Sigmoid colon (tissue), 7 donors: ENCODE measurements at regions of chr7 and their contacts with region 1.

Region 1: DNA sequence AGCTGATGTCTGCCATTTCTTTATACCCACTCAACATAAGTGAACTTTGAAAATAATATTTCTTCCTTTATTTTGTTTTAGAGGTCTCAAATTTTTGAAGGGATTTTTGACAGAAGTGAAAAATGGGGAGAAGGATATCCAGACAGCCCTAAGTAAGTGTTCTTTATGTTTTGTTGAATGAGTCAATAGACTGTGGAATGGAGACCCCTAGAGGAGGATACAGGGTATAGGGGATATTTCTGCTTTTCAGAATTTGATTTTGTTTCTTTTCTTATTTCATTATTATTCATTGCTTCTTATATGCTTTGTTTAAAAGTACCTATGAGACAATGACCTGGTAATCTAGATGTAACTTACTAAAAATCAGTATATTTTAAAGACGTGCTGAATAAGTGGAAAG is 34.4 kb downstream of the PLEKHA8 start:
- DNase-seq: no peak
- H3K4me3 ChIP-seq: no peak overlapping the region
- H3K27ac ChIP-seq: no peak overlapping the region
- H3K4me1 ChIP-seq: no peaks in the 10 kb centered on the region
- H3K27me3 ChIP-seq: no peaks in the 10 kb centered on the region
- CTCF ChIP-seq: peak in 3 of 4 experiments; percentile 7 to 46 (median 34)
- EP300 ChIP-seq: no peak
- POLR2A ChIP-seq: no peak

Region 2: GRCh38 chr7:29748286-29749108 is 314.1 kb before region 1 on chr7:
- intact Hi-C with region 1: loop called (anchors 10 kb)
- DNase-seq: no peak
- H3K4me3 ChIP-seq: no peak overlapping the region
- H3K27ac ChIP-seq: peak overlapping the region in 1 of 4 donors; percentile 57
- H3K4me1 ChIP-seq: peaks cover 0 to 12% (median 4%) of the 10 kb centered on the region in 4 donors
- H3K27me3 ChIP-seq: no peaks in the 10 kb centered on the region
- CTCF ChIP-seq: peak; percentile 9 to 53 (median 22)
- EP300 ChIP-seq: no peak
- POLR2A ChIP-seq: no peak

Region 3: DNA sequence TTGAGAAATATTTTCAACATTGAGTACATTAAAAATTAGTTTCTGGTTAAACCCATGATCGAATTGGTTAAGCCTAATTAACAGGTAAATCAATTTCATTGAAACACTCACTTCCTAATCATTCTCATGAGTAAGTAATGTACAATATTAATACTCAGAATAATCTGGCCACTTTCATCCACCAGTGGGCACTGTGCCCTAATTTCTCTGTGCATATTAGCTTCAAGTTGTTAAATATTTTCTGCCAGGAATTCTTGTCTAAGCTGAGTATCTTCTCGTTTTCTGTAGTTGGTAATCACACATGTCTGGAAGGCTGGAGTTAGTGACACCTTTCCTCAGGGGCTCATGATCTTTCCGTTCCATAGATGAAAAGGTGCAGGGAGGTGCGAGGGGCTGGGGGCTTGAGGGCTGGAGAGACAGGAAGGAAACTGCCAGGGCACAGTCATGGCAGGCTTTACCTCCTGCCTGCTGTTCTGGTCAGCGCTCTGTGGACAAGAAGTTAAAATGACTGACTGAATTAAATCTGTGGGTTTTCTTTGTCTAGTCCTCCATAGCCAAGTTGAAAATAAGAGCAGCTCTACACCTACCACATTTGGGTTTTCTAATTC is 184.4 kb before region 1 on chr7:
- intact Hi-C with region 1: loop called (anchors 5 kb)
- DNase-seq: no peak
- H3K4me3 ChIP-seq: no peak overlapping the region
- H3K27ac ChIP-seq: no peak overlapping the region
- H3K4me1 ChIP-seq: peaks cover 0 to 4% (median 0%) of the 10 kb centered on the region in 4 donors
- H3K27me3 ChIP-seq: peaks cover 0 to under 1% (median 0%) of the 10 kb centered on the region in 3 donors
- CTCF ChIP-seq: peak in 2 of 4 experiments; percentile 34 to 47
- EP300 ChIP-seq: no peak
- POLR2A ChIP-seq: no peak

Region 4: GRCh38 chr7:29946428-29947186 is 116.0 kb before region 1 on chr7:
- intact Hi-C with region 1: loop called (anchors 10 kb)
- DNase-seq: no peak
- H3K4me3 ChIP-seq: no peak overlapping the region
- H3K27ac ChIP-seq: no peak overlapping the region
- H3K4me1 ChIP-seq: no peaks in the 10 kb centered on the region
- H3K27me3 ChIP-seq: no peaks in the 10 kb centered on the region
- CTCF ChIP-seq: peak in 1 of 4 experiments; percentile 9
- EP300 ChIP-seq: no peak
- POLR2A ChIP-seq: no peak